Activated CD4-positive, alpha-beta memory T cell treated with anti-CD3 and anti-CD28 coated beads for 36 hours (primary cell): ENCODE measurements at regions of chr13 and their contacts with region 1.

Region 1: DNA sequence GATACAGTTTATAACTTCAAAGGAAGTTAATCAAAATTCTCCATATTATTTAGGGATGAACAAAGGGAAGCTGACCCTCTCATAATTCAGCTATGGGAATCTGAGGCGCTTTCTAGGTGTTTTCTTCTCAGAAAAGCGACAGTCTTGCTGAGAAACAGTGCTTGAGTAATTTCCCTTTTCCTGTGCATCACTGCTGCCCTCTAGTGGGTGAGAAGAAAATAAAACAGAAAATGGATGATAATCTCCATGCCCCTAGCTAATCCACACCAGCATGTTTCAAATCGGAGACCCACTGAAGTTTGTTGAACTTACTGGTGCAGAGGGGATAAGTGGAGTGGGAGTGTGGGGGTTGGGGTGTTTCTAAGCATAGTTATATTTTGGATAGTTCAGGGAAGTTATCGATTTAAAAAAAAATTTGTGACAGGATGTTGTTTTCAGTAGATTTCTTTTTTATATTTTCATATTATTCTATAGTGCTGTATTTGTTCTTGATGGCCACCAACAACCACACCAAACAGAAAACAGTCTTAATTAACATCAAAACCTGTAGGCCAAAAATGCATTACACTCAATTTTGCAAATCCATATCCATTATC is 21.4 kb downstream of the LCP1 start:
- DNase-seq: no peak
- H3K4me3 Mint-ChIP-seq: peak overlapping the region; percentile 53
- H3K27ac Mint-ChIP-seq: peak overlapping the region; percentile 79
- H3K4me1 Mint-ChIP-seq: peaks cover 60% of the 10 kb centered on the region
- H3K27me3 Mint-ChIP-seq: no peaks in the 10 kb centered on the region

Region 2: GRCh38 chr13:46022481-46022880 is 138.1 kb before region 1 on chr13:
- CTCF ChIA-PET with region 1: no interaction called
- POLR2A ChIA-PET with region 1: no interaction called
- intact Hi-C with region 1: no loop called
- DNase-seq: no peak
- H3K4me3 Mint-ChIP-seq: no peak overlapping the region
- H3K27ac Mint-ChIP-seq: no peak overlapping the region
- H3K4me1 Mint-ChIP-seq: peaks cover 6% of the 10 kb centered on the region
- H3K27me3 Mint-ChIP-seq: no peaks in the 10 kb centered on the region

Region 3: DNA sequence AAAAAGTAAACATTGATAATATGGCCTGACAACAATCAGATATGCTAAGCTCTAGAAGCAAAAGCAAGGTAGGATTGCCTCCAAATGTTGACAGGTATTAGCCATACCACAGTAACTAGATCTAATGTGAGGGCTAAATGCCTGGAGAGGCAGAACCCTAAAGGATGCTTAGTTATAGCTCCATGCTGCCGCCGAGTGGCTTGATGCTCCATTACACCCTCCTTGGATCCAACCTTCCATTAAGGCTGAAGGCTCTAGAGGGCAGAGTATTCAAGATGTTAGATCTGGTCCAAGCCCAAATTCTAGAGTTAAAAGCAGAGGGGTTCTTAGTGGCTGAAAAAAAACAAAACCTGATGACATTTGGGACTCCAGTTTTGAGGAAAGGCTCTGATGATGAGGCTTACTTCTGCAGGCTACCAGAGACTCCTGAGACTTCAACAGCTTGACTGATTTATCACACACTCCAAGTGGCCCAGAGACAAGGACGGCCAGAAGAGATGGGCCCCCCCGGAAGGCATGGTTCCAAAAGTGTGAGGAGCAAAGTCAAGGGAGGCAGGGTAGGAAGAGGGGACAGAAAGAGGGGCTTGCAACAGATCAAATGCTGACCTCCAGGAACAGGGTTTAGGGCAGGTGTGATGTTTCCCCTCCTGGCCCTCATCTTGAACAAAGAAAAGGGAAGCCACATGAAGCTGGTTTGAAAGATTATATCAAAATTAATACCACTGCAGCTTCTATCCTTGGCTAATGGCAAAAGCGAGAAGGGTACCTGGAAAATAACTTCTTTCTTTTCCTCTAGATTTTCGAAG is 33.8 kb before region 1 on chr13:
- CTCF ChIA-PET with region 1: interaction called, 22 read pairs
- POLR2A ChIA-PET with region 1: no interaction called
- intact Hi-C with region 1: no loop called
- DNase-seq: peak; percentile 83
- H3K4me3 Mint-ChIP-seq: no peak overlapping the region
- H3K27ac Mint-ChIP-seq: peak overlapping the region; percentile 40
- H3K4me1 Mint-ChIP-seq: peaks cover 39% of the 10 kb centered on the region
- H3K27me3 Mint-ChIP-seq: no peaks in the 10 kb centered on the region

Region 4: GRCh38 chr13:46149272-46150133 is 11.1 kb before region 1 on chr13:
- CTCF ChIA-PET with region 1: interaction called, 23 read pairs
- POLR2A ChIA-PET with region 1: interaction called, 8 read pairs
- intact Hi-C with region 1: no loop called
- DNase-seq: peak; percentile 69
- H3K4me3 Mint-ChIP-seq: no peak overlapping the region
- H3K27ac Mint-ChIP-seq: peak overlapping the region; percentile 88
- H3K4me1 Mint-ChIP-seq: peaks cover 53% of the 10 kb centered on the region
- H3K27me3 Mint-ChIP-seq: no peaks in the 10 kb centered on the region

Region 5: DNA sequence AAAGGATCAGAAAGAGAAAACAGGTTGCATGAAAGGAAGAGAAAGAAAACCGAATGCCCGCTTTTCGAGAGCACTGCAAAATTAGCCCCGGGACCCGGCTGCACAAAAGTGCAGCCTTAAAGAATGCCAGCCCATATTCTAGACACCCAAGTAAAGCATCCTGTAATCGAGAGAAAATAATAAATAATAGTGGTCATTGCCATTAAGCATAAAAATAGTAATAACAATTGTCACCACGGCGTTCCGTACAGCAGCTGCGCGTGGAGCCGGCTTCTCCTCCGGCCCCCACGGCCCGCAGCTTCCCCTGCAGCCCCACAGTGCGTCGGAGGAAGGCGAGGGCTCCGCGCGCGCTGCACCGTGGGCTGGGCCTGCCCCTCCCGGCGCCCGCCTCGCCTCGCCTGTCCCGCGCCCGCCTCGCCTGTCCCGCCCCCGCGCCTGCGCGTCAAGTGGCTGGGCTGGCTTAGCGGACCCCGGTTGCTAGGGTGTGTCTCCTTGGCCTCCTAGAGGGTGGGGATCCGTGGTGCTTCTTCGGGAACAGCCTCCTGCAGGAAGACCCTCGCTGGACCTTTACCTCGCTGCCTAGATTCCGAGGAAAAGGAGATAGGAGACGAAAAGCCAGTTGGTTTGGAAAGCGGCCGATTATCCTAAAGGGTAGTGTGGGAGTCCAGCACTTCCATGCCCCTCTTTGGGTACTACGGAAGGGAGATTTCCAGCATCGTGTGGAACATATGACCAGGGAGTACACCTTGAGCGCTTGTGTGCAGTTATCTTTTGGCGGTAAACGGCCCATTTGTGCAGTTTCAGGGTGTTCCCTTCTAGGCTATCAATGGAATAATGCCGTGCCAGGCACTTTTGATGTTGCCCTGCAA is 51.1 kb after region 1 on chr13 and contains the start of gene LRRC63:
- CTCF ChIA-PET with region 1: interaction called, 3 read pairs
- POLR2A ChIA-PET with region 1: no interaction called
- intact Hi-C with region 1: loop called (anchors 2 kb)
- DNase-seq: peak; percentile 89
- H3K4me3 Mint-ChIP-seq: peak within 1 kb of the TSS; percentile 85
- H3K27ac Mint-ChIP-seq: peak within 1 kb of the TSS; percentile 74
- H3K4me1 Mint-ChIP-seq: peaks cover 21% of the 10 kb centered on the region
- H3K27me3 Mint-ChIP-seq: no peaks in the 10 kb centered on the region
- total RNA-seq, gene LRRC63: 0.45 to 0.63 TPM